Activated B cell treated with CpG ODN at 0.5 μM for 24 hours (primary cell): ENCODE measurements at regions of chr4 and their contacts with region 1.

Region 1: GRCh38 chr4:145618932-145619638 is at the start of gene MMAA:
- DNase-seq: peak; percentile 98
- ATAC-seq: peak; percentile 95
- H3K4me3 Mint-ChIP-seq: peak within 1 kb of the TSS; percentile 94
- H3K27ac Mint-ChIP-seq: peak within 1 kb of the TSS; percentile 92
- H3K4me1 Mint-ChIP-seq: peaks cover 24% of the 10 kb centered on the region
- H3K27me3 Mint-ChIP-seq: peaks cover under 1% of the 10 kb centered on the region
- CTCF ChIP-seq: no peak
- total RNA-seq, gene MMAA: 11.3 and 13.5 TPM in 2 replicates

Region 2: DNA sequence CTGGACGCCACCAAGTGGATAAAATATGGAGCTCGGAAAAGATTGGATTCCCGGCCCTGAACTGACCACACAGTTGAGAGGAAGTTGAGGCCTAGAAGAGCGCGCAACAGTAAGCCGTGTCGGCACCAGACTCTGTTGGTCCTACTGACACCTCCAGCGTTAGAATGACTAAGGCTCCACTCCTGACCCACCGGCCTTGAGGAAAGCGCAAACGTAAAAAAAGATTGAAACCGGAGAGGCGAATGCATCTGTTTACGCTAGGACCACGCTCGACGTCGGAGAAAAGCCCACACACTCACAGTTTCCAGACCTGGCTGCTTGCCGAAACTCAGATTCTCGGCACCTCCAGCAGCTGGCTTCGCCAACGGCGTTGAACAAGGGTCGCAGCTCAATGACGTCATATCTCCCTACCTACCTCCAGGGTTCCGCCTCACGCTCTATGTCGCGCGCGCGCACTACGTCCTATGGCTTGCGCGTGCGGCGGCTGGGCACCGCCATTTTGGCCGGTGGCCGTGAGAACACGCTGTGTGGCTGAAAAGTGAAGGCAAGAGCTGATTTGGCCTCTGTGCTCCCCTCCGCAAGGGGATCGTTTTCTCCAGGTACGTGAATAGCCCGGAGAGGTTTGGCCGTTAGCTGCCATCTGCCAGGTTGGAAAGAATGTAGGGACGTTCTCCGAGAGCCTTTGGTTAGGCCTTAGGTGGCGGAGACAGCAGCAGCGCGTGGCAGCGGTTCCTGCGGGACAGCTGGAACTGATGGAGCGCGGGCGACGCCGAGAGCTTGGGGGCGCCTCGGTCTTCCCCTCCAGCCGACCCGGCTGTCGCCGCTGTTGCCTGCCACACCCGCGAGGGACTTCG is 521.0 kb before region 1 on chr4 and contains the starts of genes ABCE1 and ANAPC10:
- CTCF ChIA-PET with region 1: interaction called, 3 read pairs
- POLR2A ChIA-PET with region 1: interaction called, 13 read pairs
- intact Hi-C with region 1: loop called (anchors 1 kb)
- DNase-seq: peak; percentile 87
- ATAC-seq: peak; percentile 89
- H3K4me3 Mint-ChIP-seq: peak within 1 kb of the TSS; percentile 94
- H3K27ac Mint-ChIP-seq: peak within 1 kb of the TSS; percentile 96
- H3K4me1 Mint-ChIP-seq: peaks cover 51% of the 10 kb centered on the region
- H3K27me3 Mint-ChIP-seq: no peaks in the 10 kb centered on the region
- CTCF ChIP-seq: no peak
- total RNA-seq, gene ABCE1: 75.5 and 81.6 TPM in 2 replicates
- total RNA-seq, gene ANAPC10: 18.2 and 21.8 TPM in 2 replicates

Region 3: GRCh38 chr4:145186729-145187128 is 432.4 kb before region 1 on chr4:
- CTCF ChIA-PET with region 1: interaction called, 12 read pairs
- POLR2A ChIA-PET with region 1: interaction called, 5 read pairs
- intact Hi-C with region 1: no loop called
- DNase-seq: no peak
- ATAC-seq: peak; percentile 99
- H3K4me3 Mint-ChIP-seq: no peak overlapping the region
- H3K27ac Mint-ChIP-seq: no peak overlapping the region
- H3K4me1 Mint-ChIP-seq: peaks cover 11% of the 10 kb centered on the region
- H3K27me3 Mint-ChIP-seq: no peaks in the 10 kb centered on the region
- CTCF ChIP-seq: no peak

Region 4: GRCh38 chr4:145602129-145602760 is 16.8 kb before region 1 on chr4:
- CTCF ChIA-PET with region 1: no interaction called
- POLR2A ChIA-PET with region 1: no interaction called
- intact Hi-C with region 1: no loop called
- DNase-seq: no peak
- ATAC-seq: no peak
- H3K4me3 Mint-ChIP-seq: no peak overlapping the region
- H3K27ac Mint-ChIP-seq: no peak overlapping the region
- H3K4me1 Mint-ChIP-seq: no peaks in the 10 kb centered on the region
- H3K27me3 Mint-ChIP-seq: peaks cover 16% of the 10 kb centered on the region
- CTCF ChIP-seq: no peak

Region 5: DNA sequence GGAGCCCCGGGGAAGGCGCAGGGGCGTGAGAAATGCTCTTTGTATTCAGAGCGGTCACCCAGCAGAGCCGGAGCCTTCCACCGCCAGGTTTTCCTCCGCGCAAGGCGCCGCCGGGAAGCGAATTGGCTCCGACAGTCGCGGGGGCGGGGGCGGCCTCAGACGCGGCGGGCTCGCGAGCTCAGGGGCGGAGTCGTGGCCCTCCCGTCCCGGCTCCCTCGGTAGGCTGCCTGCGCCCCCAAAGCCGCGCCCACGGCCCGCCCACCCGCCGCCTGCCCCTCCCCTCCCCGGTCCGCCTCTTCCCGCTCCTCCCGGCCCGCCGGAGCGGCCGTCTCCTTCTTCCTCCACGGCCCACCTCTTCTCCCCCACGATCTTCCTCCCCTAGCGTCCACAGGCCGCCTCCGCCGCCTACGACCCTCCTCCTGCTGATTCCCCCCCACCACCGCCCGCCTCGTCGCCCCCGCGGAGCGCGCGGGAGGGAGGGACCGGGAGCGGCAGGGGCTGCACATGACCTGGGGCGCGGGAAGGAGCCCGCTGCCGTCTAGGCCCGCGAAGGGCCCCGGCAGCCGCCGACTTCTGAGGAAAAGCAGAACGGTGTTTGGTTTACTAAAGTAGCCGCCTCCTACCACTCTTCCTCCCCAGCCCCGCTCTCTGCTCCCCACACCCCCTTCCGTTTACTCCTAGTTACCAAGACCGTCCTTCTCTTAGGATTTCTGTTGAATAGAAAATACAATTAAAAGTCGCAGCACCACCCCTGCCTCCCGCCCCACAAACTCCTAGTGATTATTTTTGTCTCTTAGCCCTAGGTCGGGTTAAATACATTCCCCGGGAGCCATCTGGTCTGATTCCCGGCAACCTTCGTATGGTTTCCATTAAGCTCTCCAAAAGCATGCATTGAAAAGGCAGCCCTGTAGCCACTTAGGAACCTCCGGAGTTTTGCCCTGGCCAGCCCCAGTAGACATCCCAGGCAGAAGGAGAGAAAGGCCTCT is 114.1 kb after region 1 on chr4:
- CTCF ChIA-PET with region 1: interaction called, 3 read pairs
- POLR2A ChIA-PET with region 1: no interaction called
- intact Hi-C with region 1: loop called (anchors 2 kb)
- DNase-seq: peak; percentile 72
- ATAC-seq: peak; percentile 97
- H3K4me3 Mint-ChIP-seq: peak overlapping the region; percentile 85
- H3K27ac Mint-ChIP-seq: no peak overlapping the region
- H3K4me1 Mint-ChIP-seq: peaks cover 11% of the 10 kb centered on the region
- H3K27me3 Mint-ChIP-seq: peaks cover 10% of the 10 kb centered on the region
- CTCF ChIP-seq: no peak

Region 6: DNA sequence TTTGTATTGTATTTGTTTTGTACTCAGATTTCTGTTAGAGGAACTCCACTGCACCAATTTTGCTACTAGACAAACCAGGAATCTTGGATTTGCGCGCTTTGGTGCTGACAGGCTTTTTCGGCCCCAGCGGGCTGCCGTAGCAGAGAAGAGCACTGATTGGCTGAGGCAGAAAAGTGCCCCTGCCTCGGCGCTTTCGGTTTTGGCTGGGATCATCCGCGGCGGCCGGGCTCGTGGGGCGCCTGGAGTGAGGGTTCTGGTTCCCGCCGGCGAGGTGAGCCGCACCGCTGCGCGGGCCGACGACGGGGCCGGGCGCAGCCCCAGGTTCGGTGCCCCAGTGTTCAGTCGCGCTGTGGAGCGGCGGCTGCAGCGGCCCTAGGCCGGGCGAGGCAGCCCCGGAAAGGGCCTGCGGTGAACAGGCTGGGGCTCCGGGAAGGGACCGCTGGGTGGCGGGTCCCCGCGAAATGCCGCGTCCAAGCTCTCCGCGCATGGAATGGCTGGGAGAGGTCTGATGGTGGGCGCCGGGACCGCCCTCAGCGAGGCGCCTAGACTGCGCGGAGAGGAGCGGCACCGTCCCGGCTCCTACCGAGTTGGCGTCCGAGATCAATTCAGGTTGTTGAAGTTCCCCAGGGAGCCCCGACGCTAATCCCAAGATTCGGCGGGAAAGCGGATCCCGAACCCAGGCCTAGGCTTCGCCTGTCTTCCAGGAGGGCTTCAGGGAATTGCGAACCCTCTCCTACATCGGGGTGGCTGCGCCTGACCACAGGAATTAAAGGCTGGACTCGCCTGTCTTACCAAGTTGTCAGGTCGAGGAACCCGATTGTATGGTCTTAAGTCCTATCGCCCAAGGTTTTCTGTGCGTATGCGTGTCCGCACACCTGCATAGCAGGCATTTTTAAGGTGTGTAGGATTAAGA is 556.7 kb after region 1 on chr4 and contains the start of gene LSM6:
- CTCF ChIA-PET with region 1: no interaction called
- POLR2A ChIA-PET with region 1: no interaction called
- intact Hi-C with region 1: loop called (anchors 2 kb)
- DNase-seq: peak; percentile 75
- ATAC-seq: peak; percentile 93
- H3K4me3 Mint-ChIP-seq: peak within 1 kb of the TSS; percentile 87
- H3K27ac Mint-ChIP-seq: peak within 1 kb of the TSS; percentile 90
- H3K4me1 Mint-ChIP-seq: peaks cover 44% of the 10 kb centered on the region
- H3K27me3 Mint-ChIP-seq: no peaks in the 10 kb centered on the region
- CTCF ChIP-seq: no peak
- total RNA-seq, gene LSM6: 57.4 and 59.7 TPM in 2 replicates

Region 7: GRCh38 chr4:146945556-146946374 is 1326.7 kb after region 1 on chr4 and contains the start of gene TTC29:
- CTCF ChIA-PET with region 1: no interaction called
- POLR2A ChIA-PET with region 1: no interaction called
- intact Hi-C with region 1: loop called (anchors 1 kb)
- DNase-seq: peak; percentile 70
- ATAC-seq: peak; percentile 99
- H3K4me3 Mint-ChIP-seq: peak within 1 kb of the TSS; percentile 80
- H3K27ac Mint-ChIP-seq: no peak within 1 kb of the TSS
- H3K4me1 Mint-ChIP-seq: peaks cover 29% of the 10 kb centered on the region
- H3K27me3 Mint-ChIP-seq: peaks cover 21% of the 10 kb centered on the region
- CTCF ChIP-seq: no peak
- total RNA-seq, gene TTC29: not detected in 2 replicates